Gastrocnemius medialis (tissue), 4 donors: ENCODE measurements at regions of chr2 and their contacts with region 1.

Region 1: DNA sequence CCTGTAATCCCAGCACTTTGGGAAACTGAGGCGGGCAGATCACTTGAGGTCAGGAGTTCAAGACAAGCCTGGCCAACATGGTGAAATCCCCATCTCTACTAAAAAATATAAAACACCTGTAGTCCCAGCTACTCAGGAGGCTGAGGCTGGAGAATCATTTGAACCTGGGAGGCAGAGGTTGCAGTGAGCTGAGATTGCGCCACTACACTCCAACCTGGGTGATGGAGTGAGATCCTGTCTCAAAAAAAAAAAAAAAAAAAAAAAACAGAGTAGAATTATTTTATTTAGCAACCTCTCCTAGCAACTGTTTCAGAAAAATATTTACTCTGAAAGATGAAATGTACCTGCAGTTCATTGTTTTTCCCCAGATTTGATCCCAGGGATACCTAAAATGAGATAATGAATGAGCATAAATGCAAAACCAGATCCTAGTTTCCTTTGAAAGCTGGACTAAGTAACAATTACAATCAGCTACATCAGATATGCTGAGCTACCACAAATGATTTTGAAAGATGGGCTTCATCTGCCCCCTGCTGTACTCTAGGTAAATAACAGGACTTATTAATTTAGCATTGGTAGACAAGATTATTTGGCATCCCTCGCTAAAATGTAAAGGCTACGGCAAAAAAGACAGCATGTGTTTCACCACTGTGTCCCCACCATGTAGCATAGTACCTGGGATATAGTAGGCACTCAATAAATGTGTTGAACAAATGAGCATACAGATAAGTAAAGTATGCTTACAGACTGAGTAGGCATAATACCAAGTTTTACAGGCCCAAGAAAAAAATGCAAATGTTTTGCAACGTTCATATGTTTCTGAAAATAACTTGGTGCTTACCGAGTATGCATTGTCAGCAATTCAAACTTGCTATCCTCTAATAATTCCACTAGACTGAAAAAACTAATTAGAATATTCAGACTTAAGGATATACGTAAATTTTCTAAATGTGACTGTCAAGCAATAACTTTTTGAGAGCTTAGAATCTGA is 102.5 kb downstream of the ATL2 start:
- DNase-seq: peak in 1 of 2 donors; percentile 8
- ATAC-seq: peak; percentile 60 to 66
- H3K4me3 ChIP-seq: no peak overlapping the region
- H3K27ac ChIP-seq: no peak overlapping the region
- H3K4me1 ChIP-seq: no peaks in the 10 kb centered on the region
- H3K27me3 ChIP-seq: no peaks in the 10 kb centered on the region
- CTCF ChIP-seq: peak; percentile 44 to 69 (median 60)
- POLR2A ChIP-seq: no peak

Region 2: GRCh38 chr2:37389989-37390765 is 884.4 kb before region 1 on chr2:
- in situ Hi-C with region 1: loop called in 2 of 4 experiments (anchors 25 kb)
- intact Hi-C with region 1: no loop called
- DNase-seq: no peak
- ATAC-seq: peak; percentile 62 to 76
- H3K4me3 ChIP-seq: no peak overlapping the region
- H3K27ac ChIP-seq: peak overlapping the region; percentile 8 to 46 (median 38)
- H3K4me1 ChIP-seq: peaks cover 7 to 9% of the 10 kb centered on the region in 2 donors
- H3K27me3 ChIP-seq: no peaks in the 10 kb centered on the region
- CTCF ChIP-seq: no peak
- POLR2A ChIP-seq: no peak

Region 3: DNA sequence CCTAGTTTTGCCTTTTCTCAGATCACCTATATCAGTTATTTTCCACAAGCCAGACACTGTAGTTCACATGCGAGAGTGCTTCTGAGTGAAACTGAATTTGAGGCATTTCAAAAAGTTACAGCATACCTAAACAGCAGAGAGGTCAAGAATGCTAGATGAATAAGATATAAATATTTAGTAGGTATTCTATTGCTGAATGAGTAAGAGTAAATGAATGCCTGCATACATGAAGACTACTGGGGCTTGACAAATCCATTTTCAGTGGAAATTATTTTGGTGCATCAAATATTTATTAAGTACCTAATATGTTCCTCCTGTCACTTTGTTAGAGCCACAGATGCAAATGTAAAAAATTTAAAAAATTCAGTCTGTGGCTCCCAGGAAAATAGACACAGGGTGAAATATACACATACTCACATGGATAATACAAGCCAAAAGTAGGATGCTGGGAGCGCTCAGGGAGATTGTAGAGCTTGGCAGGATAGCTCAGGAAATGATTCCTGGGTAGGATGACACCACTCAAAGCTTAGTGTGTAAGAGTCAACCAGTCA is 575.6 kb before region 1 on chr2:
- in situ Hi-C with region 1: no loop called
- intact Hi-C with region 1: no loop called
- DNase-seq: no peak
- ATAC-seq: no peak
- H3K4me3 ChIP-seq: no peak overlapping the region
- H3K27ac ChIP-seq: no peak overlapping the region
- H3K4me1 ChIP-seq: no peaks in the 10 kb centered on the region
- H3K27me3 ChIP-seq: no peaks in the 10 kb centered on the region
- CTCF ChIP-seq: no peak
- POLR2A ChIP-seq: no peak

Region 4: DNA sequence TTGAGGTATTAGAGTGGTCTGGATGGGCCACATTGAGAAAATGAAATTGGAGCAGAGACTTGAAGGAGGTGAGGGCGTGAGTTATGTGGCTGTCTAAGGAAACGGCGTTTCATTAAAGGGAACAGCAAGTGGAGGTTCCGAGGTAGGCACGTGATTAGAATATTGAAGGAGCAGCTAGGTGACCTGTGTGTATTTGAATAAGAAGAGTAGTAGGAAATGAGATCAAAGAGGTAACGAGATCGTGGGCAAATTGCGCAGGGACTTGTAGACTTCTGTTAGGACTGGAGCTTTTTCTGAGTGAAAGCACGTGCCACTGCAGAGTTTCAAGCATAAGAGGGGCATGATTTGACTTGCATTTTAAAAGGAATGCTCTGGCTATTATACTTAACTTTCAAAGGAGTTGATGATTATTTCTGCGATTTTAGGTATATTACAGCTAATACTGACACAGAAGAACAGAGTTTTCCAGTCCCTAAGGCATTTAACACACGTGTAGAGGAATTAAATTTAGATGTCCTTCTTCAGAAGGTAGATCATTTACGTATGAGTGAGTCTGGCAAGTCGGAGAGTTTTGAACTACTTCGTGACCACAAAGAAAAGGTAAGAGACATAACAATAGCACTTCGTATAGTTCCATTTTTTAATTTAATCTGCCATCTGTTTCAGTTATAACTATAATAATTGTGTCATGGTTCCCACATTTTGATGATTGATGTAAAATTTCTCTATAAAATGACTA is 300.8 kb before region 1 on chr2:
- in situ Hi-C with region 1: loop called in 1 of 4 experiments (anchors 10 kb)
- intact Hi-C with region 1: no loop called
- DNase-seq: no peak
- ATAC-seq: no peak
- H3K4me3 ChIP-seq: no peak overlapping the region
- H3K27ac ChIP-seq: no peak overlapping the region
- H3K4me1 ChIP-seq: no peaks in the 10 kb centered on the region
- H3K27me3 ChIP-seq: no peaks in the 10 kb centered on the region
- CTCF ChIP-seq: no peak
- POLR2A ChIP-seq: no peak

Region 5: DNA sequence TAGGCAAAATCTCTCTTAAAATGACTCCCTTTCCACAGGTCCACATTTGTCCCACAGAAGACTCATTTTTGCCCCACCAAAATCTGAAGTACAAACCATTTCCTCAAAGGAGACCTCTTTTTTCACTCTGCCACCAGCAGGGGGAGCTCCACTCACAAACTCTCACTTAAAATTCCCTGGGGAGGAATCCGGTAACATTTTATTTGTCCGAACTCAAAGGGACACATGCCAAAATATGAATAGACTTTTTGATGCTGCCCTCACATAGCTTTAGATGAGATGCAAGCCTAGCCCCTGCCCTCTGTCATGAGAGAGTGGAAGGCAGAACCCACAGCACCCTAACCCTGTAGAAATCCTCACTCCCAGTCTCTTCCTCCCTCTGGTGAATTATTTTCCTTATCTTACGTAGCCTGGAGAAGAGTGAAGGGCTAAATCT is 292.4 kb before region 1 on chr2:
- in situ Hi-C with region 1: loop called (anchors 5 to 10 kb)
- intact Hi-C with region 1: loop called (anchors 1 kb)
- DNase-seq: peak; percentile 12 to 45
- ATAC-seq: peak in 1 of 2 donors; percentile 18
- H3K4me3 ChIP-seq: peak overlapping the region in 1 of 4 donors; percentile 33
- H3K27ac ChIP-seq: no peak overlapping the region
- H3K4me1 ChIP-seq: peaks cover 0 to 7% of the 10 kb centered on the region in 2 donors
- H3K27me3 ChIP-seq: no peaks in the 10 kb centered on the region
- CTCF ChIP-seq: peak; percentile 60 to 84 (median 77)
- POLR2A ChIP-seq: no peak

Region 6: DNA sequence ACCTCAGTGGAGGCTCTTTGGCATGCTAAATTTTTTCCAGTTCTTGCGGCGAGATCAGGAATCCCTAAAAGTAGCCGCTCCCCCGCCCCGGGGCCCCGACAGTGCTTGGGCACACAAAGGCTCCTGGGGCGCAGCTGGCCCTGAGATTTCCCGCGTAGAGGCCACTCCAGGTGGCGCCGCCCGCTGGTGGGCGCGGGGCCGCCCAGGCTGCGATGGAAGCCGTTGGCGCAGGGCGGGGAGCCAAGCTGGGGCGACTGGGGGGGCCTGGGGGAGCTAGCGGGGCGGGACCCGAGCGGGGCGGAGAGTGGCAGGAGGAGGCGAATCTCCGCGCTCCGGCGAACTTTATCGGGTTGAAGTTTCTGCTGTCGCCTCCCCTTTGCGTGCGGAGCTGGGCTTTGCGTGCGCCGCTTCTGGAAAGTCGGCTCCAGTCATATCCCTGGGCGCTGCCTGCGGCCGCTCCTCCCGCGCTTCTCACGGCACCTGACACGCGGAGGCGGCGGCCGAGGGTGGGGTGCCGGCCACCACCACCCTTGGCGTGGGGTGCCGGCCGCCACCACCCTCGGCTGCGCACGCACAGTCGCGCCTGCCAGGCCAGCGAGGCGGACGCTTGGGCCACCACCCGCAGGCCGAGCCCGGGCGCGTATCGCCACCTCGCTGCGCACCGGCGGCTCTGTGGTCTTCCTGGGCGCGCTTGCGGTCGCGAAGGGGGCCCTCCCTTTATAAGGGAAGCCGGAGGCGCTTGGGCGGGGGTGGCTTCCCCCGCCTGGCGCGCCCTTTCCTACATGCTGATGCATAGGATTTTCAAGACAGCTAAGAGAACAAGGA is 197.8 kb before region 1 on chr2:
- in situ Hi-C with region 1: no loop called
- intact Hi-C with region 1: loop called (anchors 5 kb)
- DNase-seq: peak; percentile 34 to 35
- ATAC-seq: peak; percentile 40 to 53
- H3K4me3 ChIP-seq: peak overlapping the region; percentile 59 to 72 (median 66)
- H3K27ac ChIP-seq: peak overlapping the region; percentile 64 to 75 (median 73)
- H3K4me1 ChIP-seq: peaks cover 0 to 18% of the 10 kb centered on the region in 2 donors
- H3K27me3 ChIP-seq: peaks cover 33 to 41% (median 37%) of the 10 kb centered on the region in 3 donors
- CTCF ChIP-seq: peak in 2 of 5 experiments; percentile 26 to 39
- POLR2A ChIP-seq: peak in 1 of 2 donors; percentile 4